ENCODE measurements at regions of chr17 and their contacts with region 1.

Region 1: DNA sequence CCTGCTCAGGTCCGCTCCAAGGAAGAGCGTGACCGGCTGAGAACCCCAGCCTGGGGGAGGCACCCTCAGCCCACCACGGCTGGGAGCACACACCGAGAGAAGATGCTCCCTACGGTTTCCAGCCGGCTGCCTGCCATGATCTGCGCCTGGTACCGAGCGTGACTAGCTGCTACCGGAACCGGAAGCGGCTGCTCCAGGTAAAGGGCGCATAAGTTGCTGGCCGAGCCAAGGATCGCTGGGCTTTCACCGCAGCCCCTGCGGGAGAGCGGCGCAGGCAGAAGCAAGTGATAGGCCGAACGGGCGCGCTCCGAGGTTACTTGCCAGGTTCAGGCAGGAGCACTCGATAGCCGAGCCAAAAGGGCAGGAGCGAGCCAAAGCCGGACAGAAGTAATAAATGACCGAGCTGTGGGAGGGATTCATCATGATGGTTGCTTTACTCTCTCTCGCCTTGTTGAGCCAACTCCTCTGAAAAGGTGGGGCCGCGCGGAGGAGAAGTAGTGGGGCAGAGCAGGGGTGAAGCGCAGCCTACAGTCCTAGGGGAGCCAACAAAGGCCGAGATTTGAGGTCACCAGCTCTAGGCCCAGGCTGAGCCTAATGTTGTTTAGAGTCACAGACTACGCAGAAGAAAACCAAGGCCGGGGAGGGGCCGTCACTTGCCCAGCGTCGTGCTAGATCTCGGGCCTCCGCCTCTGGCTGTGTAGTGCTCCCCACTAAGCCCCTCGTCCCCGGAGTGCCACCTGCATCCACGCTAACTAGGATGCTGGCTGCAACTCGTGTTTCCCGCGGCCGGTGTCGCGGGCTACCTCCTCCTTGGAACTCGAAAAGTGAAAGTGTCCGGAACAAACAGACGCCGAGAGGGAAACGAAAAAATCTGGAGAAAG is at the start of gene MRPS23:
- DNase-seq: peak; percentile 96
- H3K4me3 Mint-ChIP-seq: peak within 1 kb of the TSS; percentile 85
- H3K27ac Mint-ChIP-seq: peak within 1 kb of the TSS; percentile 91
- H3K4me1 Mint-ChIP-seq: peaks cover 22% of the 10 kb centered on the region
- H3K27me3 Mint-ChIP-seq: no peaks in the 10 kb centered on the region
- total RNA-seq, gene MRPS23: 69.5 and 71.6 TPM in 2 replicates

Region 2: GRCh38 chr17:57868007-57868909 is 18.1 kb after region 1 on chr17:
- intact Hi-C with region 1: no loop called
- DNase-seq: no peak
- H3K4me3 Mint-ChIP-seq: no peak overlapping the region
- H3K27ac Mint-ChIP-seq: no peak overlapping the region
- H3K4me1 Mint-ChIP-seq: peaks cover 6% of the 10 kb centered on the region
- H3K27me3 Mint-ChIP-seq: peaks cover 12% of the 10 kb centered on the region

Region 3: DNA sequence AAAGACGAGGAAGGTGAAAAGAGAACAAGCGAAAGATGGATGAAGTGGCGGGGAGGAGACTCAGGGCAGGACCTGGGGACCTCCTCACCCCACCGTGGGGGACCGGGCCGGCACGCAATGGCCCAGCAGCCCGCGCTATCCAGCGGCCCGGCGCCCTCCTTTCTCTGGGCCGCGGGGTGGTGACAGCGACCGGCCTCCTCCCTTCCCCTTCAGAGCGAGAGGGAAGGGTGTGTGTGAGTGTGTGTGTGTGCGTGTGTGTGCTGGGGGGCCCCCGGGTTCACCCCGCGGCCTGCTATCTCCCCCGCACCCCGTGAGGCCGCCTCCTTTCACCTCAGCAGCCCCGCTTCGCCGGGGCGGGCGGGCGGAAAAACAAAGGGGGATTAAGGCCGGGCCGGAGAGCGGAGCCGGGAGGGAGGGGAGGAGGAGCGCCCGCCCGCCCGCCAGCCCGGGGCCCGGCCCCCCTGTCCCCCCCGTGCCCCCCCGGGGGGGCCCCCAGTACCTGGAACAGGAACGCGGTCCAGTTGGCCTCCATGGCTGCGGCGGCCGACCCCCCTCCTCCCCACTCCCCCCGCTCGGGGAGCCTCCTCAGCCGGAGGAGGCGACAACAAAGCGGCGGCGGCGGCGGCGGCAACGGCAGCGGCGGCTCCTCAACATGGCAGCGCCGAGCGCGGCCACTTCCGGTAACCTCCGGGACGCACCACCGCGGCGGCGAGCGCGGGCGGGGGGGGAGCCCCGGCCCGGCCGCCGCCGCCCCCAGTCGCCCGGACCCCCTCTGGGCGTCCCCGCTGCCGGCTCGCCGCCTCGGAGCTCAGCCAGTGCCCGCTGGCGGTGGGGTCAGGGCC is 137.7 kb after region 1 on chr17 and contains the start of gene VEZF1:
- intact Hi-C with region 1: loop called (anchors 1 kb)
- DNase-seq: peak; percentile 76
- H3K4me3 Mint-ChIP-seq: peak within 1 kb of the TSS; percentile 91
- H3K27ac Mint-ChIP-seq: peak within 1 kb of the TSS; percentile 91
- H3K4me1 Mint-ChIP-seq: peaks cover 49% of the 10 kb centered on the region
- H3K27me3 Mint-ChIP-seq: no peaks in the 10 kb centered on the region
- total RNA-seq, gene VEZF1: 37.1 and 38.7 TPM in 2 replicates

Measured in activated T-helper 2 cell treated with anti-CD3 and anti-CD28 coated beads, Interferon-gamma antibody, Interleukin-2, Interleukin-4, amounts not matched to agents 10 μg/mL and 5 μg/mL and 100 μg/mL, durations not matched to agents 14 hours and 24 hours and 36 hours (primary cell).